ENCODE measurements at regions of chr16 and their contacts with region 1.

Region 1: GRCh38 chr16:70653809-70654771 is 7.7 kb downstream of the IL34 start:
- DNase-seq: peak; percentile 89
- H3K4me3 ChIP-seq: no peak overlapping the region
- H3K27ac ChIP-seq: no peak overlapping the region
- H3K4me1 ChIP-seq: peaks cover 8% of the 10 kb centered on the region
- H3K27me3 ChIP-seq: no peaks in the 10 kb centered on the region
- CTCF ChIP-seq: peak; percentile 92 to 98 (median 95)
- POLR2A ChIP-seq: no peak

Region 2: DNA sequence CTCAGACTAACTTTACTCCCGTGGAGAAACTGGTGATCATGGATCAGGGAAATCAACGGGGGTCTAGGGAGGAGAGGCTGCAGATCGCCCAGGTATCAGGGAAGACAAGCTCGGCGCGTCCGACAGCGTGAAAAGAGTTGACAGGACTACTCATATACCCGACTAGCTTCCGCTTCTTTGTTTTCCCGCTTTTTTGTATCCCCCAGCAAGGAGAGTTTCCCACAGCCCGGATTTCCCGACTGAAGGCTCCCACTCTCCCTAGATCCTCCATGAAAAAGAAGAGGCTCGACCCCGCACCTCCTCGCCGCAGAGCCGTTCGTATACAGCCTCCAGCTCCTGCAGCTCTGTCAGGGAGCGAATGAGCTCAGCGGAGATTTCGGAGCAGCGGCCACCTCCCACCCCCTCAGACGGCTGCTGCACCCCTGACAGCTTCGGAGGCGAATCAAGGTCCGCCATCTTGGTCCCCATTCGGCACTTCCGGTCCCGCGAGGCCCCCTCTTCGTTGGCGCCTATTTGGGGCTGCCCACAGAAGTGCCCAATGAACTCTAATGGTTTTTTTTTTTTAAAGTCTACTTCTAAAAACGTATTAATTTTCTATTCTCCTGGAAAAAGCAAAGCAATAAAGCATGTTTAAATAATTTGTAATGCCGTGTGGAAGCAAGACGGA is 130.9 kb before region 1 on chr16 and contains the start of gene COG4:
- intact Hi-C with region 1: loop called (anchors 10 kb)
- DNase-seq: peak; percentile 91
- H3K4me3 ChIP-seq: peak within 1 kb of the TSS; percentile 78 to 98
- H3K27ac ChIP-seq: peak within 1 kb of the TSS; percentile 87 to 95
- H3K4me1 ChIP-seq: peaks cover 8% of the 10 kb centered on the region
- H3K27me3 ChIP-seq: no peaks in the 10 kb centered on the region
- CTCF ChIP-seq: no peak
- POLR2A ChIP-seq: no peak
- total RNA-seq, gene COG4: 85.2 to 85.9 TPM

Measured in testis (tissue), 5 donors.